ENCODE measurements at regions of chr7 and their contacts with region 1.

Region 1: DNA sequence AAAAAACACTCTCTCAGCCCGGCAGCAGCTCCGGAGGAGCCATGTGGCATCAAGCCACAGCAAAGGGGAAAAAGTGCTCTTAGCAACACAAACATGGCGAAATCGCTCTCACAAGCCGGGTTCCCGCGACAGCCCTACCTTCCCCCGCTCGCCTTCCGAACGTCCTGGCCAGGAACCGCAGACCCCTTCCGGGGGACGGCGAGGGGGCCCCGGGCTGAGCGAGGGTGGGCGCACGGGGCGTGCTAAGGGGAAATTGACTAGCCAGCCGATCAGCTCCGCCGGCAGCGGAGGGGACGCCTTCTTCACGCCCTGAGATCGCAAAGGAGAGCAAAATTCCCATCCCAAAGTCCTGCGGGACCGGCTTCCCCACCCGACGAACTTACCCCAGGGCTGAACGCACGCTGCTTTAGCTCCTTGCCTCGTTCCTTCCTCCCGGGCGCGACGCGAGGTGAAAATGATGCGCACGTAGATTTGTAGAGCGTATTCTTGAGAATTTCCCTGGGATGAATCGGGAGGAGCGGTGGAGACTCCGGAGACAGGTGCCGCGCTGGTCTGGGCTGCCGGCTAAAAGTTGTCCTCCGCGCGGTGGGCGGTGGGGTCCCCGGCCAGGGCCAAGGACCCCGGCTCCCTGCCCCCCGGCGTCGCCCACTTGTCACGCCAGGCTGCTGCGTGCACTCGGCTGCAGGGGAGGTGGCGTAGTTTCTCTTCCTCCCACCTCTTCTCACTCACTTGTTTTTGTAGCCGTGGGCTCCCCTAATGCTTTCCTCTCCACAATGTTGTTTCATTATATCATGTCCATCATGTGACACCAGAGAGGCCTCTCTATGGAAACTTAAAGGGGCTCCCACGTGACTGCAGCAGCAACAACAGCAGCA is 220.1 kb upstream of the MKLN1 start:
- DNase-seq: peak; percentile 47 to 93 (median 77)
- ATAC-seq: peak; percentile 16
- H3K4me3 ChIP-seq: peak overlapping the region; percentile 98 to 99
- H3K4me3 Mint-ChIP-seq: peak overlapping the region; percentile 88
- H3K27ac ChIP-seq: peak overlapping the region; percentile 98 to 100
- H3K27ac Mint-ChIP-seq: peak overlapping the region; percentile 94
- H3K4me1 ChIP-seq: peaks cover 58% of the 10 kb centered on the region
- H3K4me1 Mint-ChIP-seq: peaks cover 71% of the 10 kb centered on the region
- H3K27me3 ChIP-seq: no peaks in the 10 kb centered on the region
- H3K27me3 Mint-ChIP-seq: no peaks in the 10 kb centered on the region
- CTCF ChIP-seq: no peak

Region 2: DNA sequence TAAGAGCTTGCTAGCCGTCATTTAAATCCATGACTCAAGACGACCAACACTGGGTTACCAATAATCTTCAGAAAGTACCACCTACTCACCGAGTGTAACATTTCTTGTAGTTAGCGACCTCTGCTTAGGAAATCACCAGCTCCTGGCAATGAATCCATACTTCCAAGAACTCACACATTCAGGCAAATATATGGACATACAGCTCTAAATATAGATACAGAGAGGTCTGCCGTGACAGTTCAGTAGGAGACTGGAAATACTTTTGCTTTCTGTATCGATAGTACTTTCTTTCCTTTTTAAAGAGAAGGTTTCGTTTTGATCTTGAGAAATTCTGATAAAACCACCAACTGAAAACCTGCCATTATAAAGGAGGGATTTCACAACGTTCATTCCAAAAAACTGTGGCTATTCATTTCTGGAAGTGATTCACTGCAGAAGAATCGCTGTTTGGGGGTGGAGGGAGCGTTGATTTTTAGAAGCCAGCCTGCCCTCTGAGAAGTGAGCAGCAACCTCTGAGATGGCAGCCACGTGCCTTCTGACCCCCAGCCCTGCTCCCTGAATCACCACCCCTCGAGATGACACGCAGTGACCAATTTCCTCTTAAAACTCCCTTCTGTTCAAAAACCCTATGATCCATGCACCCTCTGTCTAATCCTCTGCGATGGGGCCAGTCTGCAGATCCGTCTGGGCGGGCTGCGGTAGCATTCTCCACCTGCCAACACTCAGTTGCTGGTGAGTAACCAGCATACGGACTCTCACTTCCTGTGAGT is 194.5 kb before region 1 on chr7:
- CTCF ChIA-PET with region 1: no interaction called
- POLR2A ChIA-PET with region 1: no interaction called
- intact Hi-C with region 1: loop called (anchors 2 to 5 kb)
- DNase-seq: peak; percentile 54 to 94 (median 79)
- ATAC-seq: peak; percentile 82
- H3K4me3 ChIP-seq: peak overlapping the region; percentile 65 to 82
- H3K4me3 Mint-ChIP-seq: peak overlapping the region; percentile 92
- H3K27ac ChIP-seq: peak overlapping the region; percentile 84 to 88
- H3K27ac Mint-ChIP-seq: peak overlapping the region; percentile 90
- H3K4me1 ChIP-seq: peaks cover 68% of the 10 kb centered on the region
- H3K4me1 Mint-ChIP-seq: peaks cover 90% of the 10 kb centered on the region
- H3K27me3 ChIP-seq: no peaks in the 10 kb centered on the region
- H3K27me3 Mint-ChIP-seq: no peaks in the 10 kb centered on the region
- CTCF ChIP-seq: no peak

Region 3: GRCh38 chr7:131027287-131027773 is 80.2 kb before region 1 on chr7:
- CTCF ChIA-PET with region 1: no interaction called
- POLR2A ChIA-PET with region 1: no interaction called
- intact Hi-C with region 1: no loop called
- DNase-seq: peak in 4 of 9 experiments; percentile 60 to 69 (median 64)
- ATAC-seq: peak; percentile 50
- H3K4me3 ChIP-seq: no peak overlapping the region
- H3K4me3 Mint-ChIP-seq: no peak overlapping the region
- H3K27ac ChIP-seq: peak overlapping the region in 1 of 2 experiments; percentile 46
- H3K27ac Mint-ChIP-seq: peak overlapping the region; percentile 55
- H3K4me1 ChIP-seq: peaks cover 54% of the 10 kb centered on the region
- H3K4me1 Mint-ChIP-seq: peaks cover 87% of the 10 kb centered on the region
- H3K27me3 ChIP-seq: no peaks in the 10 kb centered on the region
- H3K27me3 Mint-ChIP-seq: no peaks in the 10 kb centered on the region
- CTCF ChIP-seq: no peak

Region 4: DNA sequence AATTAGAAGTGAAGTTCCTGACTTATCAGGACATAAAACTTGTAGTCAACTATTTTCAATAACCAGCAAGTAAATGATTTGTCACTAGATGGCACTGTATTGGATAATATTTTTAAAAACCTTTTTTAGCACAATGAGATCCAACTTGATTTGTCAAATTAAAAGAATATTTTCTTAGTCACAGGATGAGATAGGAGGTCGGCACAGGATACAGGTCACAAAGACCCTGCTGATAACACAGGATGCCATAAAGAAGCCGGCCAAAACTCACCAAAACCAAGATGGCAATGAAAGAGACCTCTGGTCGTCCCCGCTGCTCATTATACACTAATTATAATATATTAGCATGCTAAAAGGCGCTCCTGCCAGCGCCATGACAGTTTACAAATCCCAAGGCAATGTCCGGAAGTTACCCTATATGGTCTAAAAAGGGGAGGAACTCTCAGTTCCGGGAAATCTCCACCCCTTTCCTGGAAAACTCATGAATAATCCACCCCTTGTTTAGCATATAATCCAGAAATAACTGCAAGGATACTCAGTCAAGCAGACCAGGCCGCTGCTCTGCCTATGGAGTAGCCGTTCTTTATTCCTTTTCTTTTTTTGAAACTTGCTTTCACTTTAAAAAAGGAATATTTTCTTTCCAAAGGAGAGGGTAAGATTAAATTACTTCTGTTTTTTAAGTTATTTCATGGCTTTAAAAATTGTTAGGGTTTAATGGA is 35.6 kb before region 1 on chr7:
- CTCF ChIA-PET with region 1: interaction called, 3 read pairs
- POLR2A ChIA-PET with region 1: interaction called, 3 read pairs
- intact Hi-C with region 1: loop called in 1 of 2 experiments (anchors 1 kb)
- DNase-seq: no peak
- ATAC-seq: no peak
- H3K4me3 ChIP-seq: no peak overlapping the region
- H3K4me3 Mint-ChIP-seq: no peak overlapping the region
- H3K27ac ChIP-seq: no peak overlapping the region
- H3K27ac Mint-ChIP-seq: no peak overlapping the region
- H3K4me1 ChIP-seq: peaks cover 64% of the 10 kb centered on the region
- H3K4me1 Mint-ChIP-seq: peaks cover 84% of the 10 kb centered on the region
- H3K27me3 ChIP-seq: no peaks in the 10 kb centered on the region
- H3K27me3 Mint-ChIP-seq: no peaks in the 10 kb centered on the region
- CTCF ChIP-seq: peak; percentile 50

Region 5: GRCh38 chr7:131188367-131189339 is 81.1 kb after region 1 on chr7:
- CTCF ChIA-PET with region 1: no interaction called
- POLR2A ChIA-PET with region 1: interaction called, 4 read pairs
- intact Hi-C with region 1: loop called (anchors 1 to 2 kb)
- DNase-seq: peak; percentile 3 to 91 (median 56)
- ATAC-seq: peak; percentile 88
- H3K4me3 ChIP-seq: no peak overlapping the region
- H3K4me3 Mint-ChIP-seq: no peak overlapping the region
- H3K27ac ChIP-seq: peak overlapping the region; percentile 6 to 73
- H3K27ac Mint-ChIP-seq: peak overlapping the region; percentile 42
- H3K4me1 ChIP-seq: peaks cover 18% of the 10 kb centered on the region
- H3K4me1 Mint-ChIP-seq: peaks cover 22% of the 10 kb centered on the region
- H3K27me3 ChIP-seq: no peaks in the 10 kb centered on the region
- H3K27me3 Mint-ChIP-seq: no peaks in the 10 kb centered on the region
- CTCF ChIP-seq: no peak

Region 6: GRCh38 chr7:131302876-131303707 is 195.5 kb after region 1 on chr7:
- CTCF ChIA-PET with region 1: interaction called, 5 read pairs
- POLR2A ChIA-PET with region 1: interaction called, 7 read pairs
- intact Hi-C with region 1: loop called in 1 of 2 experiments (anchors 2 kb)
- DNase-seq: peak in 7 of 9 experiments; percentile 19 to 60 (median 38)
- ATAC-seq: peak; percentile 56
- H3K4me3 ChIP-seq: no peak overlapping the region
- H3K4me3 Mint-ChIP-seq: no peak overlapping the region
- H3K27ac ChIP-seq: no peak overlapping the region
- H3K27ac Mint-ChIP-seq: no peak overlapping the region
- H3K4me1 ChIP-seq: no peaks in the 10 kb centered on the region
- H3K4me1 Mint-ChIP-seq: no peaks in the 10 kb centered on the region
- H3K27me3 ChIP-seq: no peaks in the 10 kb centered on the region
- H3K27me3 Mint-ChIP-seq: no peaks in the 10 kb centered on the region
- CTCF ChIP-seq: peak; percentile 50

Region 7: DNA sequence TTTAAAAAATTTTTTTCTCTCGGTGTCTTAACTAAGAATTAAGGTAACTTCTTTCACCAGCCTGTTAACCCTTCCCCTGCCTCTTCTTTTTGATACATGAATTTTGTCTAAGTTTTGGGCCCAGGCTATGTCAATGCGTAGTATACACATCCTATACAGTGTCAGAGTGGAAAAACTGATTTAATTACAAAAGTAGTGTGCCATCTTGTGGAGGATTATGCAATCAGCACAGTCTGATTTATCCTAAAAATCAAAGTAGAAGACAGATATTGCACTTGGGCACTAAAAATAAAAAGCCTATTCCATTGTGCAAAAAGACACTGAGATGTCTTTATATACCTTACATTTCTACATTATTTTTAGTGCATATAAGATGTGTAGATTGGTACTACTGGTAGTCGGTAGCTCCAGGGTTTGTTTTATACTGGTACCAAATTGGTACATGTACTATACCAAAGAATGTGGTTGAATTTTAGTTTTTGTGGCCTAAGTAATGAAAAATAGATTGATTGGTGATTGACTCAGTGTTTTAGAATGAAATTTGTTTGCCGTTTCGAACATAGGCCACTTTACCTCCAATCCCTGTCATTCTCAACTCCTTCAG is 316.7 kb after region 1 on chr7:
- CTCF ChIA-PET with region 1: no interaction called
- POLR2A ChIA-PET with region 1: no interaction called
- intact Hi-C with region 1: loop called in 1 of 2 experiments (anchors 5 kb)
- DNase-seq: peak in 2 of 9 experiments; percentile 48 to 62
- ATAC-seq: peak; percentile 97
- H3K4me3 ChIP-seq: no peak overlapping the region
- H3K4me3 Mint-ChIP-seq: no peak overlapping the region
- H3K27ac ChIP-seq: no peak overlapping the region
- H3K27ac Mint-ChIP-seq: no peak overlapping the region
- H3K4me1 ChIP-seq: no peaks in the 10 kb centered on the region
- H3K4me1 Mint-ChIP-seq: peaks cover 5% of the 10 kb centered on the region
- H3K27me3 ChIP-seq: no peaks in the 10 kb centered on the region
- H3K27me3 Mint-ChIP-seq: no peaks in the 10 kb centered on the region
- CTCF ChIP-seq: peak; percentile 74